Head of caudate nucleus (tissue), 42 donors: ENCODE measurements at regions of chr17 and their contacts with region 1.

Region 1: DNA sequence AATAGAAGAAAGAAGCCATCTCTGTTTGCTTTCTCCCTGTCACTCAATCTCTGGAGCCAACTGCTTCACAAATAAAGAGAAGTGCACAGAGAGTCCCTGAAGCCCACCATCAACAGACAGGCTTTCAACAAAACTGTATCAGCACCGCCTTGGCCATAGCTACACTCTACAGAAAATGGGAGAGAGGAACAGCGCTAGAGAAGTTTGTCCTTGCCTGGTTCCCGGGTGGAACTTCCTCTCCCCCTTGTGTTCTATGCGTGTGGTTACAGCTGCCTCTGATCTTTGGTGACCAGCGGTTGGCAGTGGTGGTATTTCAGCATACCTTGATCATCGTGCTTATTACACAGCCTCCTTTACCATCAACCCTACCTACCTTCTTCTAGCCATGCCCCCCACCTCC is 91.4 kb upstream of the CCL2 start:
- DNase-seq: peak in 8 of 42 donors; percentile 9 to 53 (median 28)

Region 2: DNA sequence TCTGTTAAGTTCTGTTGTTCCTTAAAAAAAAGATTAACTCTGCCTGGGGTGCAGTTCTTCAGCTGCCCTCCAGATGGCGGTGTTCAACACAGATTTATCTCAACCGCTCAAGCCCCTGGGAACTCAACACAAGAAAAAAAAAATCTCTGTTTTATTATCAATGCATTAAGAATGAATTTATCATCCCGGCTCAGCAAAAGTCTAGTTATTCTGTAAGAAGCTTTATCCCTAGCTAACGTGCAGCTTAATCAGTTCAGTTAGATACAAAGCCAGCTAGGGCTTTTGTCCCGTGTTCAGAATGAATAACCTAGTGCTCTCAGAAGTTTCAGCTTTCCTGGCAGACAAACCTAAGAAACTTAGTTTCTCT is 384.4 kb before region 1 on chr17:
- intact Hi-C with region 1: loop called (anchors 5 kb)
- DNase-seq: peak; percentile 22 to 84 (median 66)

Region 3: DNA sequence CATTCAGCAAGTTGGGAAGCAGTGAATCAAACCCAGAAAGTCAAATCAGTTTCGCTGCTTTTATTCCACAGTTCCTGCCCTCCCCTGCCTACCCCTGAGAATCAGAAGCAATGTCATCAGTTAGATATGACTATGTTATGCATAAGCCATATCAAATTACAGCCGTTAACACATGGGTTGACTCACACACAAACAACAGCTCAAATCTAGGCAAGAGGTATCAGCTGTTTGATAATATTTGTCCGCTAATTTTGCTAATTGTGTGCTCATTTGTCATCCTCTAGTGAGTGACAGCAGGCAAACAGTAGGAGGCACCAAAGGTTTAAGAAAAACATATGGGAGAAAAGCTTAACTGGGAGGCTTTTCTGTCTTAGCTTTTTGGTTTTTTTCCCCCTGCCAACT is 235.9 kb before region 1 on chr17:
- intact Hi-C with region 1: loop called (anchors 10 kb)
- DNase-seq: no peak

Region 4: DNA sequence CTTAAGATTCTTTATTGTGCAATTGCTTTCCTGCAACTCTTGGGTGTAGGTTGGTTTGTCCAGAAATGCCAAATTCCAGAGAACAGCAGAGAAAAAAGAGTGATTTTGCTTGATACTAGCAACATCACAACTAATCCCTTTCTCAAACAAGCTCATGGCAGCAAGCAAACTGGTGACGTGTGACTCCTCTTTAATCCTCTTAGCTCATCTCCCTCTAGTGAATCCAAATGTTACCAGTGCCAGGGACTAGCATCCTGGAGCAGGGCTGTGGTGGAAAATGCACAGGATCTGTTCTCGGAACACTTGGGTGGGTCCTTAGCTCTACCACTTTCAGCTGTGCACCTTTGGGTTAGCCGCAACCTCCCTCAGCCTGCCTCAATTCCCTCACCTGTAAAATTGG is 112.6 kb before region 1 on chr17:
- intact Hi-C with region 1: no loop called
- DNase-seq: no peak

Region 5: GRCh38 chr17:34220754-34221395 is 57.2 kb after region 1 on chr17:
- intact Hi-C with region 1: no loop called
- DNase-seq: no peak